ENCODE measurements at regions of chr19 and their contacts with region 1.

Region 1: GRCh38 chr19:7386308-7386707 is 37.6 kb downstream of the ARHGEF18 start:
- DNase-seq: peak; percentile 62
- ATAC-seq: peak; percentile 67
- H3K4me3 Mint-ChIP-seq: no peak overlapping the region
- H3K27ac Mint-ChIP-seq: peak overlapping the region; percentile 87
- H3K4me1 Mint-ChIP-seq: peaks cover 20% of the 10 kb centered on the region
- H3K27me3 Mint-ChIP-seq: no peaks in the 10 kb centered on the region

Region 2: DNA sequence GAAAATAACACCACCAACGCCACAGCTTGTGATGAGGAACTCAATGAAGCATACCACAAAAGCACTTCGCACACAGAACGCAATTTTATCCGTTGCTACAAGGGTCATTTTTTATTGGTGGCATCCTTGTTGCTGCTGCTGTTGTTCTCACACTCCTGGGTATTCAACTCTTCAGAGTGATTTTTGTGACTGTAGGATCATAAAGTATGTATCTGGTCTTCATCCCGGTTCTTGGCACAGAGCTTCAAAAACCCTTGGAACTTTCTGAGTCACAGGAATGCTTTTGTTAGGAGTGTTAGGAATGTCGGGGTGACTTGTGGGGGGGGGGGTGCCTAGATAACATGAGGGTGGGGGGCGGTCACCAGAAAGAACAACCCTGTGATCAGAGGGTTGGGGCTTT is 208.4 kb before region 1 on chr19:
- CTCF ChIA-PET with region 1: no interaction called
- POLR2A ChIA-PET with region 1: no interaction called
- intact Hi-C with region 1: no loop called
- DNase-seq: no peak
- ATAC-seq: no peak
- H3K4me3 Mint-ChIP-seq: no peak overlapping the region
- H3K27ac Mint-ChIP-seq: no peak overlapping the region
- H3K4me1 Mint-ChIP-seq: peaks cover 18% of the 10 kb centered on the region
- H3K27me3 Mint-ChIP-seq: peaks cover 12% of the 10 kb centered on the region

Region 3: DNA sequence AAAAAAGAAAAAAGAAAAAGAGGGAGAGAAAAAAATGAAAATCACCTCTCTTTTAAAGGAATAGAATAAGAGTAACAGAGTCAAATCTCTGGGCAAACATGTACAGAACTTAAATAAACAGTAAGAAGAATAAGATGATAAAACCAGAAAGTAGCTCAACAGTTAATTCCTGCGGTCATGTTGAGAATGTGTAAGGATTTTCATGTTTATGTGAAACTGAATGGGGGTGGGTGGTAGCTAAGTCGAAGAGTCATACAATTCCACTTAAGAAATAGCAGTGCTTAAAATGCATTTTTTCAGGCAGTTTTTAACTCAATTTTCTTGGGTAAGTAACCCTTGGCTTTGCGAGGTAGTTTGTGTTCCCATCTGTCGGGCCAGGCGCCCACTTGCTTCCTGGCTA is 41.6 kb after region 1 on chr19:
- CTCF ChIA-PET with region 1: interaction called, 3 read pairs
- POLR2A ChIA-PET with region 1: no interaction called
- intact Hi-C with region 1: loop called in 1 of 2 experiments (anchors 1 kb)
- DNase-seq: no peak
- ATAC-seq: peak; percentile 50
- H3K4me3 Mint-ChIP-seq: no peak overlapping the region
- H3K27ac Mint-ChIP-seq: peak overlapping the region; percentile 67
- H3K4me1 Mint-ChIP-seq: peaks cover 40% of the 10 kb centered on the region
- H3K27me3 Mint-ChIP-seq: no peaks in the 10 kb centered on the region

Measured in activated CD4-positive, alpha-beta T cell treated with anti-CD3 and anti-CD28 coated beads for 36 hours (primary cell).